IMR-90 (cell line): ENCODE measurements at regions of chr18 and their contacts with region 1.

Region 1: DNA sequence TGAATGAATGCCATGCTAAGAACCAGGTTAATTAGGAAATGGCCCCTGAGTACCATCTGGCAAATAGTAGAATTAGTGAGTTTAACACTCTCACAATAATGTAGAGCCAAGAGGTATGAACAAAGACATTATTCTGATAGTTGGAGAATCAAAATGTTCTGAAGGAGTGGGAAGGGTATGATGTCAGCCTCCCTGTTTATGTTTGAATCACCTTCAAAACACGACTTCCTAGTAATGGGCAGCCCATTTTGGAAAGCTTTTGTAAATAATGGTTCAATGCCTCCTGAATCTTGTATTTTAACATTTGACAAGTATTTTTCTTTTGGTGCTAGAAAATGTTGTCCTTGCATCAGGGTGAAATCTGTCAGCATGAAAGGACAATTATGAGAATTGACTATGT is 108.3 kb downstream of the DSEL start:
- DNase-seq: peak; percentile 72
- ATAC-seq: peak; percentile 70
- H3K4me3 ChIP-seq: no peak overlapping the region
- H3K27ac ChIP-seq: no peak overlapping the region
- H3K4me1 ChIP-seq: peaks cover 4% of the 10 kb centered on the region; the same call in 1 of the 2 replicates
- H3K27me3 ChIP-seq: no peaks in the 10 kb centered on the region
- CTCF ChIP-seq: no peak
- POLR2A ChIP-seq: no peak
- RAD21 ChIP-seq: no peak

Region 2: GRCh38 chr18:67373646-67374045 is 34.6 kb before region 1 on chr18:
- CTCF ChIA-PET with region 1: no interaction called
- POLR2A ChIA-PET with region 1: interaction called, 4 read pairs
- dilution Hi-C with region 1: no loop called
- in situ Hi-C with region 1: no loop called
- intact Hi-C with region 1: loop called (anchors 5 kb)
- DNase-seq: no peak
- ATAC-seq: no peak
- H3K4me3 ChIP-seq: no peak overlapping the region
- H3K27ac ChIP-seq: no peak overlapping the region
- H3K4me1 ChIP-seq: no peaks in the 10 kb centered on the region
- H3K27me3 ChIP-seq: no peaks in the 10 kb centered on the region
- CTCF ChIP-seq: no peak
- POLR2A ChIP-seq: no peak
- RAD21 ChIP-seq: no peak

Region 3: GRCh38 chr18:67553471-67553870 is 145.2 kb after region 1 on chr18:
- CTCF ChIA-PET with region 1: no interaction called
- POLR2A ChIA-PET with region 1: no interaction called
- dilution Hi-C with region 1: no loop called
- in situ Hi-C with region 1: no loop called
- intact Hi-C with region 1: no loop called
- DNase-seq: peak; percentile 31
- ATAC-seq: no peak
- H3K4me3 ChIP-seq: no peak overlapping the region
- H3K27ac ChIP-seq: no peak overlapping the region
- H3K4me1 ChIP-seq: no peaks in the 10 kb centered on the region; the same call in 1 of the 2 replicates
- H3K27me3 ChIP-seq: no peaks in the 10 kb centered on the region
- CTCF ChIP-seq: no peak
- POLR2A ChIP-seq: no peak
- RAD21 ChIP-seq: no peak

Region 4: DNA sequence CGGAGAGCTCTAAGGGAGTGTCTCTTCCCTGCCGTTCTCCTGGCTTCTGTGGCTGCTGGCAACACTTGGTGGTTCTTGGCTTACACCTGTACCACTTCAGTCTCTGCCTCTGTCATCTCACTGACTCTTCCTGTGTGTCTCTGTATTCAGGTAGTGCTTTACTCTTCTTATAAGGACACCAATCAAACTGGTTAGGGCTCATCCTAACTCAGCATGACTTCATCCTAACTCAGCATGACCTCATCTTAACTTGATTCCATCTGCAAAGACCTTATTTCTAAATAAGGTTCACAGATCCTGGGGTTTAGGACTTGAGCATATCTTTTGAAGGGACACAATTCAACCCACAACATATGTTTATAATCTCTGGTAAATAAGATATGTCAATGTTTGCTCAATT is 159.9 kb after region 1 on chr18:
- CTCF ChIA-PET with region 1: no interaction called
- POLR2A ChIA-PET with region 1: no interaction called
- dilution Hi-C with region 1: no loop called
- in situ Hi-C with region 1: no loop called
- intact Hi-C with region 1: no loop called
- DNase-seq: no peak
- ATAC-seq: no peak
- H3K4me3 ChIP-seq: no peak overlapping the region
- H3K27ac ChIP-seq: no peak overlapping the region
- H3K4me1 ChIP-seq: no peaks in the 10 kb centered on the region
- H3K27me3 ChIP-seq: no peaks in the 10 kb centered on the region
- CTCF ChIP-seq: no peak
- POLR2A ChIP-seq: no peak
- RAD21 ChIP-seq: no peak